HEK293T (cell line): ENCODE measurements at regions of chr19 and their contacts with region 1.

Region 1: DNA sequence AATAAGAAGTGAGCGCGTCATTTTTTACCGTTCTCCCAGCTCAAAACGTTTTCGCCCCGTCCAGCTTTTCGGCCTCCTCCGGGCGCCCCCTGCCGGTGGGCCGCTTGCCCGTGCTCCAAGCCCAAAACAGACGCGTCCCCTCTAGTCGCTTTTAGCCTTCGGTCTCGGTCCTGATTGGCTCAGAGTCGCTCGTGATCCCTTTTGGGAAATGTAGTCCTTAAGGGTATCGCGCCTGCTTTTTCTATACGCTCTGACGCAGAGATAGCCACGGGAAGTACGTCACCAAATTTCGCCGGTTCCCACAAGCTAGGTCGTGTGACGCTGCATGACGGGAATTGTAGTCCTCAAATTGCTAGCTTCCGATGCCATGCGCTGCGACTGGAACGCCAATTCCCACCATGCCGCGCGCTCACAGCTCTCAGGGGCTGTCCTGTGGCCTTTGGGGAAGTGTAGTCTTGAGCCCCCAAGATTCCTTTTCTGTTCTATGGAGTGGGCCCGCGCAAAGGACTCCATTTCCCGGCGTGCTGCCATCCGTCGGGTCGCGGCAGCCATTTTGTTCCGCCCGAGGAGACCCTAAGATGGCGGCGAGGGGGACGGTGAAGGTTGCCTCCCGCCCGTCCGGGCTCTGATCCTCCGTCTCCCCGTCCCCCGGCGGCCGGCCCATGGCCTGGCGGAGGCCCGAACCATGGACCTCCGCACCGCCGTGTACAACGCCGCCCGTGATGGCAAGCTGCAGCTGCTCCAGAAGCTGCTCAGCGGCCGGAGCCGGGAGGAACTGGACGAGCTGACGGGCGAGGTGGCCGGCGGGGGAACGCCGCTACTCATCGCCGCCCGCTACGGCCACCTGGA is at the start of gene FEM1A:
- DNase-seq: peak; percentile 95

Region 2: DNA sequence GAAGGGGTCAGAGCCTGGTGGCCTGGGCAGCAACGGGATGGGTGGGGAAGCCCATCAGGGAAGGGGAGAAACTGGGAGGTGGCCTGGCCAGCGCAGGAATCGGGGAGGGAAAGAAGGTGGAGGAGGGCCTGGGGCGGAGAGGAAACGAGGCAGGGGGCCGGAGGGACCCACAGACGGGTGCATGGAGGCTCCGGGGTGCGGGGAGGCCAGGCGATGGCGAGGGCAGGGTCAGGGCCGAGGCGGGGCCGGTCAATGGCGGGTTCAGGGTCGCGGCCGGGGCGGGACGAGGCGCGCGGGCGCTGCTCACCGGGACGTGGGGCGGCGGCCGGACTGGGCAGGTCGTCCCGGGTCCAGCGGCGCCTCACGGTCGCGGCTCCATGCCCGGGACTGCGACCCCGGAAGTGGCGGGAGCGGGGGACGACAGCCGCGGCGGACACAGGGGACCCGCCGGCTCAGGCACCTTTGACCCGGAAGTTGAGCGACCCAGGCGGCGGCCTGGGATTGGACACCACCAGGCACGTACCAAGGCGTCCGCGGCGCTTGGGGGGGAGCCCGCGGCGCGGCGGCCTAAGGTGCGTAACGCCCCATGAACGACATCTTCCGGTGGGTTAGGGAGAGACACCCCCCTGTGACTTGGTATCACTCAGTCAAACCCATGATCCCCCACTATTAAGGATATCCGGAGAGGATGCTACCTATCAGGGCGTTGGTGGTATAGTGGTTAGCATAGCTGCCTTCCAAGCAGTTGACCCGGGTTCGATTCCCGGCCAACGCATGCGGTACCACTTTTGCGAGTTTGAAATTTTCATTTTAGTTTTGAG is 67.8 kb before region 1 on chr19 and contains the start of gene DPP9:
- CTCF ChIA-PET with region 1: interaction called, 15 read pairs
- POLR2A ChIA-PET with region 1: interaction called, 25 read pairs
- DNase-seq: peak; percentile 99

Region 3: GRCh38 chr19:4732680-4733114 is 58.7 kb before region 1 on chr19:
- CTCF ChIA-PET with region 1: interaction called, 18 read pairs
- POLR2A ChIA-PET with region 1: interaction called, 12 read pairs
- DNase-seq: peak; percentile 74

Region 4: GRCh38 chr19:4738734-4739133 is 52.7 kb before region 1 on chr19:
- CTCF ChIA-PET with region 1: interaction called, 18 read pairs
- POLR2A ChIA-PET with region 1: interaction called, 12 read pairs
- DNase-seq: no peak

Region 5: DNA sequence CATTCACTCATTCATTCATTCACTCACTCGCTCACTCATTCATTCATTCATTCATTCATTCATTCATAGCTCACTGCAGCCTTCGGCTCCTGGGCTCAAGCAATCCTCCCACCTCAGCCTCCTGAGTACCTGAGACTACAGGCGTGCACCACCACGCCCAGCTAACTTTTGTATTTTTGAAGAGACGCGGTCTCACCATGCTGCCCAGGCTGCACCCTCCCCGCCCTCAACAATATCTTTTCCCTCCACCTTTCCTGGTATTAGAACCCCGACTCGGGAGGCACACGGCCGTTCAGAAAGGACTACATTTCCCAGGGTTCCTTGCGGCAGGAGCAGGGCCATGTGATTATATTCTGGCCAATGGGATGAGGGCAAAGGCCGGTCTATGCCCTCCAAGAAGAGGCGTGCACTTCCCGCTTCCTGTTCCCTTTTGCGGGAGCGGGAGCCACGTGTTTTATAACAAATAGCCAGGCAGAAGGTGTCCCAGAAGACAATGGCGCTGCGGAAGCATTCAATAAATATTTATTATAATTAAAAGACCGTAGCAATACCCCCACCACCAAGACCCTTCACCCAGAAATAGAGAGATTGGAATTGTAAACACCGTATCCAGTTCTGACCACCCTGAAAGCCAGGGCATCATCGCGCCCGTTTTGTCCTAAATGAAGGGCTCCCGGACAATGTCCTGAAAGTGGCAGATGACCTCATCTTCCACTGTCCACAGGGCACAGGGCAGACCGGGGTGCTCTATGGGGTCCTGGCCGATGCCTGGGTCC is 24.2 kb after region 1 on chr19:
- CTCF ChIA-PET with region 1: interaction called, 11 read pairs
- POLR2A ChIA-PET with region 1: no interaction called
- DNase-seq: peak; percentile 94